Heart right ventricle (tissue), 16 donors: ENCODE measurements at regions of chr17 and their contacts with region 1.

Region 1: DNA sequence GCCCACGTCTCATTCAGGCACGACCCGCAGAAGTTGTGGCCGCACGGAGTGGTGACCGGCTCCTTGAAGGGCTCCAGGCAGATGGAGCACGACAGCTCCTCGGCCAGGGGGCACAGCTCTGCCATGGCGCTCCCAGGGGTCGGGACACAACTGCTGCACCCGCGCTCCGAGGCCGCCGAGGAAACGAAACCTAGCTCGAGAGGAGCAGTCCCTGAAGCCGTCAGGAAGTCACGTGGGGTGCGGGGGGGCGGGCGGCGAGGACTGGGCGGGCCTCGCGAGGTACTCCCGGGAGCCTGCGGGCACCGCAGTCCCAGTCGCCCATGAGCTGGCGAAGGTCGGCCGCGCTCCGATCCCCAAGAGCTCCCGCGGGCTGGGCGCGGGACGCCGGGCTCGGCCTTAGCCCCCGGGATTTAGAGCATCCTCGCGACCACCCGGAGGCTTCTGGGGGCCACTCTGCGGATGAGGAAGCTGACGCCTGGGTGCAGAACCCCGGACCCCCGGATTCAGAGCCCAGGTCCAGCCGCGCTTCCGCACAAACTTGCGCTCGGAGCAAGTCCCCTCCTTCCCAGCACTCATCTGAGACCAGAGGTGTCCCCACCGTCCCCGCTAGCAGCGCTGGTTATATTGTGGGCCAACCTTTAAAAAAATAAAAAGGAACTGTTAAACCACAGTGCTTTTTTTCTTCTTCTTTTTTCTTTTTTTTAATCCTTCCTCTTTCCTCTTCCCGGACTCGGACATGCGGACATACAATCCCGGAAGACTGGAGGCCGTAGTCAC is at the start of gene TRIM25:
- DNase-seq: peak; percentile 91 to 93
- ATAC-seq: peak; percentile 93 to 97 (median 96)
- H3K4me3 ChIP-seq: peak within 1 kb of the TSS; percentile 66 to 99 (median 90)
- H3K27ac ChIP-seq: peak within 1 kb of the TSS; percentile 71 to 96 (median 91)
- H3K4me1 ChIP-seq: peaks cover 5 to 74% (median 42%) of the 10 kb centered on the region in 9 donors
- H3K27me3 ChIP-seq: no peaks in the 10 kb centered on the region
- CTCF ChIP-seq: no peak
- total RNA-seq, gene TRIM25: 8.7 to 32.7 (median 17.3) TPM

Region 2: DNA sequence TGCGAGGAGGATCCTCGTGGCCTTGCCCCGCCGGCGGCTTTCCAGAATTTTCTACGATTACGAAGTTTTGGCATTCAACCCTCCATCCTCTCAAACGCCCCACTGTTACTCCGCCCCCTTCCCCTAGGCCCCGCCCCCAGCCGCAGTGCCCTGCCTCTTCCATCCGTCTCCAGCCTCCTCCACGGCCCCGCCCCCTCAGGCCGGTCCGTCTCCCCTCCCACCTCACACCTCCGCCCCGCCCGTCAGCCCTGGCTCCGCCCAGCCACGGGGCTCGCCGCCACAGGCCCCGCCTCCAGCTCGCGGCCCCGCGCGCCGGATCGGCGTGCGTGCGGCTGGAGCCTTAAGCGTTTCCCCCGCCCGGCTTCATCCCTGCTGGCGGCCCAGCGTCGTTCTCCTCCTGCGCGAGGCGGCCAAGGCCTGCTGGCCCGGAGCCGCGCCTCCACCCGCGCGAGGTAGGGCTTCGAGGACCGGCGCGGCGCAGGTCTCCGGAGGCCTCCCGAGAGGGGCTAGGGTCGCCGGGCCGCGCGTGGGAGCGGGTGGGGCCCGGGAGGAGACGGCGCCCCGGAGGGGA is 80.2 kb before region 1 on chr17 and contains the starts of genes C17orf67 and DGKE:
- intact Hi-C with region 1: loop called in 3 of 10 experiments (anchors 1 to 5 kb)
- DNase-seq: peak; percentile 98 to 99
- ATAC-seq: peak; percentile 98 to 99 (median 99)
- H3K4me3 ChIP-seq: peak within 1 kb of the TSS; percentile 61 to 94 (median 76)
- H3K27ac ChIP-seq: peak within 1 kb of the TSS; percentile 71 to 91 (median 88)
- H3K4me1 ChIP-seq: peaks cover 3 to 61% (median 21%) of the 10 kb centered on the region in 9 donors
- H3K27me3 ChIP-seq: no peaks in the 10 kb centered on the region
- CTCF ChIP-seq: no peak
- total RNA-seq, gene C17orf67: 0.23 to 1.5 (median 0.91) TPM
- total RNA-seq, gene DGKE: 2.0 to 5.3 (median 2.7) TPM

Region 3: DNA sequence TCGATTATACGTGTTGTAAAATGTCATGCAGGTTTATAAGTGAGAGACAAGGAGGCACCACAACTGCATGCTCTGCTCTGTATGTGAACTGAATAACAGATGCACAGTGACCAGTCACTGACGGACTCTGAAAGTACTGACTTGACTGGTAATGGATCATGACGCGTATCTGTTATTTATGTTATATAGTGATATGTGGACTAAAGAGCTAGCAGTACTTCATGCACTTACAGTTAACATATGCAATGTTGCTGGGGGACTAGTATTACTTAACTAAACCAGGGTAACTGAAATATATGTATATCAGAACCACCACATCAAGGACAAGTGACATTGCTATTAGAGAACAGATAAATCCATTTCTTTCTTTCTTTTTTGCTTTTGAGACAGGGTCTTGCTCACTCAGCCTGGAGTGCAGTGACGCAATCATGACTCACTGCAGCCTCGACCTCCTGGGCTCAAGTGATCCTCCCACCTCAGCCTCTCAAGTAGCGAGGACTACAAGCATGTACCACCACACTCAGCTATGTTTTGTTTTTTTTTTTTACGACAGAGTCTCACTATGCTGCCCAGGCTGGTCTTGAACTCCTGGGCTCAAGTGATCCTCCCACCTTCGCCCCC is 29.6 kb after region 1 on chr17:
- intact Hi-C with region 1: no loop called
- DNase-seq: no peak
- ATAC-seq: no peak
- H3K4me3 ChIP-seq: no peak overlapping the region
- H3K27ac ChIP-seq: no peak overlapping the region
- H3K4me1 ChIP-seq: peaks cover 0 to 6% (median 0%) of the 10 kb centered on the region in 9 donors
- H3K27me3 ChIP-seq: no peaks in the 10 kb centered on the region
- CTCF ChIP-seq: no peak